ENCODE measurements at regions of chr18 and their contacts with region 1.

Region 1: GRCh38 chr18:43129946-43130524 is 14.6 kb upstream of the RIT2 start:
- ATAC-seq: peak in 2 of 8 experiments; percentile 52 to 75
- H3K4me3 ChIP-seq: no peak overlapping the region
- H3K27ac ChIP-seq: no peak overlapping the region
- H3K4me1 ChIP-seq: peaks cover 0 to 9% of the 10 kb centered on the region in 2 donors

Region 2: GRCh38 chr18:43192408-43192807 is 62.4 kb after region 1 on chr18:
- in situ Hi-C with region 1: no loop called
- ATAC-seq: no peak
- H3K4me3 ChIP-seq: no peak overlapping the region
- H3K27ac ChIP-seq: no peak overlapping the region
- H3K4me1 ChIP-seq: peaks cover 0 to 3% of the 10 kb centered on the region in 2 donors

Region 3: DNA sequence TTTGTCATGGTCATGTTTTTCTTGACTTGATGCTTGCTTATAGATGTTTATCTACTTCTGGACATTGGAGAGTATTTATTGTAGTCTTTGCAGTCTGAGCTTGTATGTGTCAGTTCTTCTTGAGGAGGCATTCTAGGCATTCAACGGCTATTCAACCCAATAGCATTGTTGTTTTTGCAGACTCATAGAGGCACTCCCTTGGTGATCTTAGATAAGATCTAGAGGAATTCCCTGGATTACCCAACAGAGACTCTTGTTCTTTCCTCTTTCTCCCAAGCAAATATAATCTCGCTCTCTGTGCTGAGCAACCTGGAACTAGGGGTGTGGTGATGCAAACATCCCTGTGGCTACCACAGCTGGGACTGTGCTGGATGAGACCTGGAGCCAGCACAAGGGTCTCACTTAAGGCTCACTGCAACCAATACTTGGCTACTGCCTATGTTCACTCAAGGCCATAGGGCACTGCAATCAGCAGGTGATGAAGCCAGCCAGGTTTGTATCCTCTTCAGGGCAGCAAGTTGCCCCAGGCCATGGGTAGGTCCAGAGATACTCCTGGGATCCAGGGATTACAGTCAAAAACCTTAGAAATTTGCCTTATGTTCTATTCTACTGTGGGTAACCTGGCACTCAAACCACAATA is 107.0 kb after region 1 on chr18:
- in situ Hi-C with region 1: loop called in 1 of 9 experiments (anchors 25 kb)
- ATAC-seq: no peak
- H3K4me3 ChIP-seq: no peak overlapping the region
- H3K27ac ChIP-seq: no peak overlapping the region
- H3K4me1 ChIP-seq: no peaks in the 10 kb centered on the region